ENCODE measurements at regions of chr14 and their contacts with region 1.

Region 1: GRCh38 chr14:91060351-91061055 is at the start of gene RPS6KA5:
- DNase-seq: peak; percentile 100
- ATAC-seq: peak; percentile 87
- H3K4me3 Mint-ChIP-seq: no peak within 1 kb of the TSS
- H3K27ac Mint-ChIP-seq: peak within 1 kb of the TSS; percentile 71
- H3K4me1 Mint-ChIP-seq: peaks cover 58% of the 10 kb centered on the region
- H3K27me3 Mint-ChIP-seq: no peaks in the 10 kb centered on the region
- total RNA-seq, gene RPS6KA5: 11.9 to 13.8 TPM

Region 2: DNA sequence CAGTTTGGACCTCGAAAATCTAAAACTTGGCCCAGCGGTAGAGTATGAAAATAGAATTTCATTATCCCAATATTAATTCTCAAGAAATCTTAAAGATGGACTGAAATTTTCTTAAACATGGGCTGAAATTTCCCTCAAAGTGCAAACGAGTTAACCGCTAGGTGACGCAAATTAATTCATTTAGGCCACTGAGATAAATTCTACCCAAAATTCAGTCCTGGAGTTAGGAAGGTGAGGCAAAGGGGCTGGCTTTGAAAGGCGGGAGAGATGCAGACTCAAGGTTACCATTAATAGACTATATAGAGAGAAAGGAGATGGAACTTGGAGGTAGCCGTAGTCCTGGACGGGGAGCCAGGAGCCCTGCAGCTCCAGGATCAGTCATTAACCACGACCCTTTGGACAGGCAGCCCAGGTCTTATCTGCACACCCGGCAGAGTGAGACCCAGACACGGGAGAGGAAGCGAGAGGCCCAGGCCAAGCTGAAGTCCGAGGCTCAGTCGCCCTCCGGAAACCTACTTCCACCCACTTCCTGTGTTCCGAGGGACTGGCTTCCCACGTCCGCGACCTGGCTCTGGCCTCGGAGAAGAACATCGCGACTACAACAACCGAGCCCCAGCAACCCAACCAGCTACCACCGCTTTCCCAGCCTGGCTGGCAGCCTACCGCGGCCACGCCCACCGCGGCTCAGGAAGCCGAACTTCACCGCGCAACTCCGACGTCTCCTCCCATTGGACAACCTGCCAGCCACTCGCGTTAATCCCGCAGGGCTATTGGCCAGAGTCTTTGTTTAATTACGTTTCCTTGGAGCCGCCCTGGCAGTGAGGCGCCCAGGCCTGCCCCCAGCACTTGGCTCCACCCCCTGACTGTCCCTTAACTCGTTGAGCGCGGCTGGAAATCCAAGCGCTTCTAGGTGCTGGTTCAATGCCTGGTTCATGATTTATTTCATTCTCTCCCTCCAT is 1106.2 kb before region 1 on chr14 and contains the start of gene EFCAB11:
- CTCF ChIA-PET with region 1: no interaction called
- POLR2A ChIA-PET with region 1: no interaction called
- intact Hi-C with region 1: loop called in 1 of 2 experiments (anchors 1 kb)
- DNase-seq: peak; percentile 97
- ATAC-seq: peak; percentile 86
- H3K4me3 Mint-ChIP-seq: peak within 1 kb of the TSS; percentile 94
- H3K27ac Mint-ChIP-seq: peak within 1 kb of the TSS; percentile 91
- H3K4me1 Mint-ChIP-seq: peaks cover 32% of the 10 kb centered on the region
- H3K27me3 Mint-ChIP-seq: no peaks in the 10 kb centered on the region
- total RNA-seq, gene EFCAB11: 4.8 to 6.3 TPM

Region 3: DNA sequence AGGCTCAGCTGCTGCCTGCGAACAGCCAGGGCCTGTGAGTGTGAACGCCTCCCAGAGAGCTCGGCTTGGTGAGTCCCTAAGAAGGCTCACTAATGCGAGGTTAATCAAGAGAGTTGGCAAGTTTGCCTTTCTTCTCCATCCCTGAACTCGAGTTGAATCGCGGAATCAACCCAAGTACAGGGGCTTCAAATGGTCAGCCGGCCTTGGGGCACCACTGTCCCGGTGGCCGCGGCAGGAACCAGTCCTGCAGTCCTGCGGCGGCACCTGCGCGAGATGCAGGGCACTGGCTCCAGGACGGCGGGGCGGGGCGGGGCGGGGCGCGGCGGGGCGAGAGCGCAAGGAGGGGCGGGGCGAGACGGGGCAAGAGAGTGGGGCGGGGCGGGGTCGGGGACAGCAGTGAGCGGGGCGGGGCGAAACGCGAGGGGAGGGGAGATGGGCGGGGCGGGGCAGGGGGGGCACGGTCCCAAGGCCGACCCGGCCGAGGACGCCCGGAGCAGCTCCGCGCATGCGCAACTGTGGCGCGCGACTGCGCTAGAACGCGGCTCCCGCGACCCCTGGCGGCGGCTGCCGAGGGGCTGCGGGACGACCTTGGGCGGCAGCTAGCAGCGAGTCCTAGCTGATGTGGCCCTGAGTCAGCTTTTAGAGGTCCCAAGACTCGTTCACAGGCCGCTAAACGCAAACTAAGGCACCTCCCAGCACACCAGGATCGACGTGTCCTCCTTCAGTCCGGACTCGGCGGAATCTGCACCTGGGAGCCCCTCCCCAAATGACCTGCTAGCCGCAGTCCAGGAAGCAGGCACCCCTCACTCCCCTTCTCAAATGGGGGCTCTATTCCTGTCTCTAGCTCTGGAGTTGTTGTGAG is 302.2 kb before region 1 on chr14:
- CTCF ChIA-PET with region 1: interaction called, 3 read pairs
- POLR2A ChIA-PET with region 1: no interaction called
- intact Hi-C with region 1: loop called (anchors 1 to 2 kb)
- DNase-seq: peak; percentile 97
- ATAC-seq: peak; percentile 93
- H3K4me3 Mint-ChIP-seq: peak overlapping the region; percentile 74
- H3K27ac Mint-ChIP-seq: peak overlapping the region; percentile 79
- H3K4me1 Mint-ChIP-seq: peaks cover 32% of the 10 kb centered on the region
- H3K27me3 Mint-ChIP-seq: peaks cover 2% of the 10 kb centered on the region

Region 4: DNA sequence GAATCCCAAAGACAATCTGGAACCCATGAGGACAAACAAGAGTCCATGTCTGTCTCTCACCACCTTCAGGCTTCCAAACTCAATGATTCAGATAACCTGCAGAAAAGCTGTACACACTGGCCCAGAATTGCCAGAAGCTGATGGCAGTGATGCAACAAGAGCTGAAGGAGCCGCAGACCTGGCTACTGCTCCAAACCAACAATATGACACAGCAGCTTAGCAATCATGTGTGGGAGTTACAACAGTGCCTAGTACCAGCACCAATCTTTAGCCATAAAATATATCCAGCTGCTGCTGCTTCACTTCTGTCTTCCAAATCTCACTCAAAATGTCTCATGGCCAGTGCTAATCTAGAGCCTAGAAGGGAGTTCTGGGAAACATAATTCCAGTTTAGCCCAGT is 22.1 kb before region 1 on chr14:
- CTCF ChIA-PET with region 1: interaction called, 11 read pairs
- POLR2A ChIA-PET with region 1: interaction called, 7 read pairs
- intact Hi-C with region 1: no loop called
- DNase-seq: peak; percentile 24
- ATAC-seq: peak; percentile 41
- H3K4me3 Mint-ChIP-seq: no peak overlapping the region
- H3K27ac Mint-ChIP-seq: peak overlapping the region; percentile 49
- H3K4me1 Mint-ChIP-seq: peaks cover 64% of the 10 kb centered on the region
- H3K27me3 Mint-ChIP-seq: no peaks in the 10 kb centered on the region

Region 5: GRCh38 chr14:91228112-91229004 is 167.9 kb after region 1 on chr14:
- CTCF ChIA-PET with region 1: no interaction called
- POLR2A ChIA-PET with region 1: interaction called, 3 read pairs
- intact Hi-C with region 1: loop called in 1 of 2 experiments (anchors 1 kb)
- DNase-seq: peak; percentile 95
- ATAC-seq: peak; percentile 87
- H3K4me3 Mint-ChIP-seq: peak overlapping the region; percentile 67
- H3K27ac Mint-ChIP-seq: peak overlapping the region; percentile 100
- H3K4me1 Mint-ChIP-seq: peaks cover 95% of the 10 kb centered on the region
- H3K27me3 Mint-ChIP-seq: no peaks in the 10 kb centered on the region

Region 6: GRCh38 chr14:91317381-91318308 is 257.1 kb after region 1 on chr14:
- CTCF ChIA-PET with region 1: no interaction called
- POLR2A ChIA-PET with region 1: no interaction called
- intact Hi-C with region 1: loop called in 1 of 2 experiments (anchors 5 kb)
- DNase-seq: peak; percentile 93
- ATAC-seq: peak; percentile 60
- H3K4me3 Mint-ChIP-seq: peak overlapping the region; percentile 56
- H3K27ac Mint-ChIP-seq: peak overlapping the region; percentile 96
- H3K4me1 Mint-ChIP-seq: peaks cover 83% of the 10 kb centered on the region
- H3K27me3 Mint-ChIP-seq: no peaks in the 10 kb centered on the region